Naive thymus-derived CD4-positive, alpha-beta T cell (primary cell): ENCODE measurements at regions of chr10 and their contacts with region 1.

Region 1: DNA sequence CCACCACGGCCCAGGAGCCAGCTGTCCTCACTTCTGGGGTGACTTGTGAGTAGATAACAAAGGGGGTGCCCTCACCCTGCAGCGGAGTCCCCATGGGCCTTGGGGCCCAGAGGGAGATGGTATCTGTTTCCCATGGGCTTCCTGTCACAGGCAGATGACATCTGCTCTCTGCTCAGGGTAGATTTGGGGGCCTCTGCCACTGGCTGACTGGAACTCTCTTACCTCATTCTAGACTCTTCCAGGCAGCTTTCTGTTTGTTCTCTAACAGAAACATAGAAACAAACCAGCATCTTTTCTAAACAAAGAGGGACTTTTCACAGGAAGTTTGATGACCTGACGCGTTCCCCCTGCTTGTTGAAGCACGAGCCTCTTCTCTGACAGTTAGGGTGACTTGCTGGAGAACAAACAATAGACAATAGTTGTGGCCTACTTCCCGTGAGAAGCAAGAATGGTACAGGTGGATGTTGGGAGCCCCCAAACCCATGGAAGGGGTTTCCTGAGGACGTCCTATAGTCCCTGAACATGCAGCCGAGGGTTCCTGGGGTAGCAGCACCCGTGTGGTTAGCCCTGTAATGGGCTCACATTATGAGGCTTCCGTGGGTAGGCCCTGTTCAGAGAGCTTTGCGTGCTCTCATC is 61.6 kb downstream of the GRK5 start:
- DNase-seq: peak; percentile 51 to 97 (median 89)
- ATAC-seq: peak; percentile 92
- H3K4me3 ChIP-seq: peak overlapping the region; percentile 20
- H3K4me3 Mint-ChIP-seq: peak overlapping the region; percentile 52 to 77 (median 64)
- H3K27ac ChIP-seq: peak overlapping the region; percentile 96
- H3K27ac Mint-ChIP-seq: peak overlapping the region; percentile 92 to 100 (median 98)
- H3K4me1 ChIP-seq: peaks cover 43 to 48% of the 10 kb centered on the region in 2 donors
- H3K4me1 Mint-ChIP-seq: peaks cover 28 to 72% (median 64%) of the 10 kb centered on the region in 7 donors
- H3K27me3 ChIP-seq: no peaks in the 10 kb centered on the region
- H3K27me3 Mint-ChIP-seq: no peaks in the 10 kb centered on the region

Region 2: DNA sequence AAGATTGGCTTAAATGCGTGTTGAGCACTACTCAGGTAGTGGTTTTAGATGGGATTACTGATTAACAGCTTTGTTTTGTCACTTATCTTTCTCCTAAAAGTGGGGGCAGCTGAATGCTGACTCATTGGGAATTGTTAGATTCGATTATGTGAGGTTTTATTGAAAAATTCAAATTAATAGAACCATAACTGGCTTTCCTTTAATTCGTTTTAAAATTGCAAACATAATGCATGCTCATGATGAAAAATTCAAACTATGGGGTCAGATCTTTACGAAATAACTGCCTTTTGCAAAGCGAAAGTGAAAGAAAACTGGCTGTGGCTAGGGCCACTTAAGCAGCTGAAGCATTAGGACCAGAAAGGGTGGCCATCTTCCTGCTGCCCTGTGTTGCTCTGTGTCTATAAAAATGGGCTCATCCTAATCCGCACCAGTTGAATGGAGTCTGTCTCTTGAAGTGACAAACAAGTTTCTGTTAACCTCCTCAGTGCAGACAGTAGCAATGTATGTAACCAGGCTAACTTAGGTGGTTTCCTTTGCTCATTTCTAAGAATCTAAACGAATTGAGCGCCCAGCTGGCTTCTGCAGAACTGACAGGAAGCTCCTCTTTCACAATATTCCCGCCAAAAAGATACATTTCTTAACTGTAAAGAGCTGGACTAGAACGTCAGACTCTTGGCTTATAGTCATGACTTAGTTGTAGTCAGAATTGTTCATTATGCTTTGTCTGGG is 137.3 kb before region 1 on chr10:
- CTCF ChIA-PET with region 1: no interaction called
- POLR2A ChIA-PET with region 1: no interaction called
- intact Hi-C with region 1: loop called in 1 of 2 experiments (anchors 2 kb)
- DNase-seq: peak in 8 of 9 donors; percentile 24 to 61 (median 40)
- ATAC-seq: peak; percentile 77
- H3K4me3 ChIP-seq: peak overlapping the region; percentile 73
- H3K4me3 Mint-ChIP-seq: peak overlapping the region; percentile 81 to 96 (median 91)
- H3K27ac ChIP-seq: peak overlapping the region; percentile 66
- H3K27ac Mint-ChIP-seq: peak overlapping the region; percentile 92 to 97 (median 95)
- H3K4me1 ChIP-seq: peaks cover 8 to 16% of the 10 kb centered on the region in 2 donors
- H3K4me1 Mint-ChIP-seq: peaks cover 16 to 59% (median 32%) of the 10 kb centered on the region in 7 donors
- H3K27me3 ChIP-seq: no peaks in the 10 kb centered on the region
- H3K27me3 Mint-ChIP-seq: no peaks in the 10 kb centered on the region

Region 3: GRCh38 chr10:119290291-119291048 is 21.5 kb after region 1 on chr10:
- CTCF ChIA-PET with region 1: no interaction called
- POLR2A ChIA-PET with region 1: interaction called, 3 read pairs
- intact Hi-C with region 1: loop called in 1 of 2 experiments (anchors 1 kb)
- DNase-seq: no peak
- ATAC-seq: no peak
- H3K4me3 ChIP-seq: no peak overlapping the region
- H3K4me3 Mint-ChIP-seq: peak overlapping the region; percentile 21 to 78 (median 56)
- H3K27ac ChIP-seq: peak overlapping the region; percentile 67
- H3K27ac Mint-ChIP-seq: peak overlapping the region; percentile 72 to 95 (median 92)
- H3K4me1 ChIP-seq: peaks cover 34 to 77% of the 10 kb centered on the region in 2 donors
- H3K4me1 Mint-ChIP-seq: peaks cover 67 to 85% (median 79%) of the 10 kb centered on the region in 7 donors
- H3K27me3 ChIP-seq: no peaks in the 10 kb centered on the region
- H3K27me3 Mint-ChIP-seq: no peaks in the 10 kb centered on the region